ENCODE measurements at regions of chr1 and their contacts with region 1.

Region 1: GRCh38 chr1:8061210-8061609 is 35.1 kb upstream of the ERRFI1 start:
- DNase-seq: no peak
- H3K4me3 ChIP-seq: no peak overlapping the region
- H3K27ac ChIP-seq: peak overlapping the region; percentile 39
- H3K4me1 ChIP-seq: peaks cover 14% of the 10 kb centered on the region
- H3K27me3 ChIP-seq: no peaks in the 10 kb centered on the region
- CTCF ChIP-seq: no peak
- POLR2A ChIP-seq: no peak

Region 2: DNA sequence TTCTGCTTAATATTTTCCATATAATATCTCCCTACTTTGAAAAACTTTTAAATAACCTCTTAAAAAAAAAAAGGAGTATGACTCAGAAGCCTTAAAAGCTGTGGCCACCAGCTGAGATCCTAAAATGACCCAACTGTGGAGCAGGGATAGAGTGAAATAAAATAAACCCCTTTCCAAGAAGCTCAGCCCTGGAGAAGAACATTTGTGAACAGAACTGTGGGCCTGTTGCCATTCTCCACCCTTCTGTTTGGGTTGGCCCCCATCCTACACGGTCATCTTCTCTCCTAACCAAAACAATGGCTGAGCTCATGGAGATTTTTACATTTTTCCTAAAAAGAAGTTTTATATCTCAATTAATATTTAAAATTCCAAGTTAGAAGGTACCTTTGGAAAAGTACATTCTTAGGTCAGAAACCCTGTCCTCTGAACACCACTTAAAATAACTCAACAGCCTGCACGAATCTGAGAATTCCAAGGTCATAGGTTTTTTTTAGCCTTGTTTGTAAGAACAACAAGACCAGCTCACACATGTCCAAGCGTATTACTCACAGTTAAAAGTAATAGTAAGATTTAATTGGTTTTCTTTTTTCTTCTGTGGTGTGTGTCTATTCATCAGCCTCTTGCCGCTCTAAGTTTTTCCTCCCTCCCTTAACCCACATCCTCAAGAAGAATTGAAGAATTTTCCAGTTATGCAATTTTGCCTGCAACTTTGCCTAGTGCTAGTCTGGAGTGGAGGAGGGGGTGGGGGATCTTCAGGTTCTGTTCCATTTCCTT is 72.6 kb after region 1 on chr1:
- intact Hi-C with region 1: no loop called
- DNase-seq: no peak
- H3K4me3 ChIP-seq: no peak overlapping the region
- H3K27ac ChIP-seq: peak overlapping the region; percentile 87
- H3K4me1 ChIP-seq: peaks cover 37% of the 10 kb centered on the region
- H3K27me3 ChIP-seq: no peaks in the 10 kb centered on the region
- CTCF ChIP-seq: no peak
- POLR2A ChIP-seq: no peak

Region 3: GRCh38 chr1:8776104-8776503 is 714.9 kb after region 1 on chr1:
- intact Hi-C with region 1: loop called (anchors 5 kb)
- DNase-seq: no peak
- H3K4me3 ChIP-seq: no peak overlapping the region
- H3K27ac ChIP-seq: no peak overlapping the region
- H3K4me1 ChIP-seq: no peaks in the 10 kb centered on the region
- H3K27me3 ChIP-seq: no peaks in the 10 kb centered on the region
- CTCF ChIP-seq: no peak
- POLR2A ChIP-seq: no peak